Adrenal gland (tissue), 19 donors: ENCODE measurements at regions of chr3 and their contacts with region 1.

Region 1: DNA sequence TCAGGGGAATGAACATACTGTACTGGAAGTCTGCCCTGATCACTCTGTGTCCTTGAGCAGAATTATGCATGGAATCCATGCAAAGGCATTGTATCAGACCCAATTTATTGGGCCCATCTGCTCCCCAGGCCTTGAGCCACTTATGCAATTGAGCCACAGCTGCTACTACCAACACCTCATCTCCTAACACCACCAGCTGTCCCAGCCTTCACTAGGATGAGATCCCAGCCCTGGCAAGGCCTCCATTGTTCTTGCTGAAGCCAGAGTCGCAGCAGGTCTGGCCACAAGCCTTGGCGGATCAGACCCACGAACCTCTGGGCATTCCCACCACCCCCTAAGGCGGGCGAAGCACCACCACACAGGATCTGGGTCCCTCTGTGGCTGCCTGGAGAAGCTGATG is 9.2 kb upstream of the NME9 start:
- DNase-seq: peak in 4 of 7 donors; percentile 58 to 72 (median 64)
- H3K4me3 ChIP-seq: no peak overlapping the region
- H3K27ac ChIP-seq: peak overlapping the region in 2 of 5 donors; percentile 21 to 61
- H3K4me1 ChIP-seq: peaks cover 0 to 10% of the 10 kb centered on the region in 2 donors
- H3K27me3 ChIP-seq: no peaks in the 10 kb centered on the region
- CTCF ChIP-seq: no peak
- POLR2A ChIP-seq: no peak

Region 2: DNA sequence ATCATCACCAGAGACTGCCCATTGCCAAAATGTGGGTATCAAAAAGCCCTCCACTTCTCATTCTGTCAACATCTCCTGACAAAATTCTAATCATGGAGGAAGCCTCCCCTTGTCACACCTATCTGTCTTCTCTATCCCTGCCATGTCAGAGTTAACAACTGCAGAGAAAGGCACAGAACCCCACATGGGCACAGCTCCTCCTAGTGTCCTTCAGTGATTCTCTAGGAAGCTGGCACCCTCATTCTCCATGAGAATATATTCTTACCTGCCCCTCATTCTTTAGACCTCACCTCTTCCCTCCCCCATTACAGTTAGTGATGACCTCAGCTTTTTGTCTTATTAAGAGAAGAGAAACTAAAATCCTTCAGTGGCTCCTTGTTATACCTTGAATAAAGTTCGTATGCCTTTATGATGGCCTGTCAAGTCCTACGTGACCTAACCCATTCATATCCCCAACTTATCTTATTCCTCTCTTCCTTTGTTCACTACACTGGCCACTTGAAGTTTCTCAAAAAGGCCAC is 53.8 kb before region 1 on chr3:
- intact Hi-C with region 1: no loop called
- DNase-seq: no peak
- H3K4me3 ChIP-seq: no peak overlapping the region
- H3K27ac ChIP-seq: no peak overlapping the region
- H3K4me1 ChIP-seq: no peaks in the 10 kb centered on the region
- H3K27me3 ChIP-seq: no peaks in the 10 kb centered on the region
- CTCF ChIP-seq: no peak
- POLR2A ChIP-seq: no peak

Region 3: GRCh38 chr3:138397983-138398382 is 59.2 kb after region 1 on chr3:
- intact Hi-C with region 1: loop called in 1 of 2 experiments (anchors 5 kb)
- DNase-seq: peak in 4 of 7 donors; percentile 16 to 60 (median 45)
- H3K4me3 ChIP-seq: no peak overlapping the region
- H3K27ac ChIP-seq: peak overlapping the region in 3 of 5 donors; percentile 29 to 92 (median 83)
- H3K4me1 ChIP-seq: peaks cover 4 to 37% of the 10 kb centered on the region in 2 donors
- H3K27me3 ChIP-seq: no peaks in the 10 kb centered on the region
- CTCF ChIP-seq: peak in 5 of 6 experiments; percentile 20 to 40 (median 26)
- POLR2A ChIP-seq: no peak

Region 4: GRCh38 chr3:138417559-138417982 is 78.8 kb after region 1 on chr3:
- intact Hi-C with region 1: loop called in 1 of 2 experiments (anchors 5 kb)
- DNase-seq: peak; percentile 79 to 94 (median 84)
- H3K4me3 ChIP-seq: no peak overlapping the region
- H3K27ac ChIP-seq: no peak overlapping the region
- H3K4me1 ChIP-seq: peaks cover 8 to 12% of the 10 kb centered on the region in 2 donors
- H3K27me3 ChIP-seq: no peaks in the 10 kb centered on the region
- CTCF ChIP-seq: peak; percentile 82 to 92 (median 88)
- POLR2A ChIP-seq: no peak